ENCODE measurements at regions of chr2 and their contacts with region 1.

Region 1: DNA sequence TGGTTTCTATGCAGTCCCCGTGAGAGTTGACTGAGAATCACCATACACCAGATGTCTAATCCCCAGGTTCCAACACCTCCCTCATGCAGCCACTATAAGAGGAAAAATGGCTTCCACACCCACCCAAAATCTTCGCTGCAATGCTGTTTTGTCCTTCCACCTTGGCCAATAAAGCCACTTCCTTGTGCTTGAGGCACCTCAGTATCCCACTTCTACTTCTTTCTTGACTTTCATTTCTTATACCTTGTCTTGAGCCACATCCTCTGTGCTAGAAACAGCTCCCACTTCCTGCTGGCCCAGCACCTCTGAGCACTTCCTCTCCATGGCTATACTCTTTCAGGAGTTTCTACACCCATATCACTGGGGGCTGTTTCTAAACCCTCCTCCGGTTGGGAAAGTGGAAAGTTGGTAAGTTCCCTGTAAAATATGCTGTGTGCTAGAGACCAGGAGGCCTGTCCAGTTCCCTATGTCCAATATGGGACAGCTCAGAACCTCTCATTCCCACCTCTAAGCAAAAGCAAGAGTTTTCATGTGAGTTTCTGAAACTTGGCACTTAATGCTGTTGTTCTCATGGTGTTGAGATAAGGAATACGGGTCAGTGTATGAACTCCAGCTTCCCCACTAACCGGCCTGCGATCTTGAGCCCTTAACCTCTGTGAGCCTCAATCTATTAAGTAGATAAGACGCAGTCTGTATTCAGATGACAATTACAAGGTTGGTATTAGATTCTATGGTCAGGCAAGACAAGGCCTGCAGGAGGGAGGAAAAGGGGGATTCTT is 209.1 kb upstream of the ID2 start:
- DNase-seq: peak in 1 of 9 donors; percentile 8
- ATAC-seq: peak; percentile 36
- H3K4me3 ChIP-seq: peak overlapping the region; percentile 15
- H3K4me3 Mint-ChIP-seq: peak overlapping the region in 9 of 10 donors; percentile 5 to 58 (median 45)
- H3K27ac ChIP-seq: no peak overlapping the region
- H3K27ac Mint-ChIP-seq: peak overlapping the region; percentile 4 to 85 (median 15)
- H3K4me1 ChIP-seq: peaks cover 19 to 64% of the 10 kb centered on the region in 2 donors
- H3K4me1 Mint-ChIP-seq: peaks cover 34 to 86% (median 44%) of the 10 kb centered on the region in 7 donors
- H3K27me3 ChIP-seq: no peaks in the 10 kb centered on the region
- H3K27me3 Mint-ChIP-seq: no peaks in the 10 kb centered on the region

Region 2: GRCh38 chr2:8514796-8515758 is 42.3 kb after region 1 on chr2:
- CTCF ChIA-PET with region 1: no interaction called
- POLR2A ChIA-PET with region 1: no interaction called
- intact Hi-C with region 1: loop called in 1 of 2 experiments (anchors 5 kb)
- DNase-seq: peak in 6 of 9 donors; percentile 11 to 65 (median 28)
- ATAC-seq: peak; percentile 77
- H3K4me3 ChIP-seq: peak overlapping the region; percentile 18
- H3K4me3 Mint-ChIP-seq: peak overlapping the region; percentile 5 to 63 (median 54)
- H3K27ac ChIP-seq: no peak overlapping the region
- H3K27ac Mint-ChIP-seq: peak overlapping the region in 6 of 9 donors; percentile 7 to 88 (median 30)
- H3K4me1 ChIP-seq: peaks cover 7 to 51% of the 10 kb centered on the region in 2 donors
- H3K4me1 Mint-ChIP-seq: peaks cover 15 to 67% (median 21%) of the 10 kb centered on the region in 7 donors
- H3K27me3 ChIP-seq: no peaks in the 10 kb centered on the region
- H3K27me3 Mint-ChIP-seq: peaks cover 0 to 1% (median 0%) of the 10 kb centered on the region in 5 donors